ENCODE measurements at regions of chr9 and their contacts with region 1.

Region 1: DNA sequence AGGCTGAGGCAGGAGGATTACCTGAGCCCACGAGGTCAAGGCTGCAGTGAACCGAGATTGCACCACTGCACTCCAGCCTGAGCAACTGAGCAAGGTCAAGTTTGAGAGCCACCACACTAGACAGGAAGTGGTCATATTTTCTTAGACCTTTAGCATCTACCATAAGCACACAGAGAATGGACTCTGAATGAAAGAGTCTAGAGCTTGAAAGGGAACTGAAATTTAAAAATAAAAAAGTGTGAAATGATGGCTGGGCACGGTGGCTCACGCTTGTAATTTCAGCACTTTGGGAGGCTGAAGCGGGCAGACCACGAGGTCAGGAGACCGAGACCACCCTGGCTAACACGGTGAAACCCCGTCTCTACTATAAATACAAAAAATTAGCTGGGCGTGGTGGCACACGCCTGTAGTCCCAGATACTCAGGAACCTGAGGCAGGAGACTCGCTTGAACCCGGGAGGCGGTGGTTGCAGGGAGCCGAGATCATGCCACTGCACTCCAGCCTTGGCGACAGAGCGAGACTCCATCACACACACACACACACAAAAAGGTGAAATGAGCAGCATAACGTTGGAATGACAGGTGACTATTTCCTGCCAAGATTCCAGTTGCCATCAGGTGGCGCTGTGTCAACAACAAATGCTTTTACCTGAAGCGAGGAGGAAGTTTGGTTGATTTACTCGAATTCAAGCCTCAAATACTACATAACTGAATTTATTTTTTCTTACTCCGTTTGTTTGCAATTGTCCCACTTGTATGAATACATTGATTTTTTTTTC is 21.3 kb upstream of the AK3 start:
- DNase-seq: peak; percentile 71
- ATAC-seq: peak; percentile 65 to 79
- H3K4me3 ChIP-seq: peak overlapping the region; percentile 37
- H3K27ac ChIP-seq: peak overlapping the region; percentile 44
- H3K4me1 ChIP-seq: peaks cover 30% of the 10 kb centered on the region
- H3K27me3 ChIP-seq: no peaks in the 10 kb centered on the region
- CTCF ChIP-seq: peak; percentile 80

Region 2: GRCh38 chr9:4679268-4680172 is 82.8 kb before region 1 on chr9 and contains the start of gene CDC37L1:
- intact Hi-C with region 1: no loop called
- DNase-seq: peak; percentile 98
- ATAC-seq: peak; percentile 99 to 100
- H3K4me3 ChIP-seq: peak within 1 kb of the TSS; percentile 81
- H3K27ac ChIP-seq: peak within 1 kb of the TSS; percentile 96
- H3K4me1 ChIP-seq: peaks cover 21% of the 10 kb centered on the region
- H3K27me3 ChIP-seq: no peaks in the 10 kb centered on the region
- CTCF ChIP-seq: peak; percentile 83
- total RNA-seq, gene CDC37L1: 14.3 TPM

Region 3: GRCh38 chr9:4984621-4985385 is 222.5 kb after region 1 on chr9 and contains the start of gene JAK2:
- intact Hi-C with region 1: loop called (anchors 5 kb)
- DNase-seq: peak; percentile 95
- ATAC-seq: peak; percentile 97
- H3K4me3 ChIP-seq: peak within 1 kb of the TSS; percentile 91
- H3K27ac ChIP-seq: peak within 1 kb of the TSS; percentile 98
- H3K4me1 ChIP-seq: peaks cover 52% of the 10 kb centered on the region
- H3K27me3 ChIP-seq: no peaks in the 10 kb centered on the region
- CTCF ChIP-seq: peak; percentile 56
- total RNA-seq, gene JAK2: 32.8 TPM